ENCODE measurements at regions of chr4 and their contacts with region 1.

Region 1: DNA sequence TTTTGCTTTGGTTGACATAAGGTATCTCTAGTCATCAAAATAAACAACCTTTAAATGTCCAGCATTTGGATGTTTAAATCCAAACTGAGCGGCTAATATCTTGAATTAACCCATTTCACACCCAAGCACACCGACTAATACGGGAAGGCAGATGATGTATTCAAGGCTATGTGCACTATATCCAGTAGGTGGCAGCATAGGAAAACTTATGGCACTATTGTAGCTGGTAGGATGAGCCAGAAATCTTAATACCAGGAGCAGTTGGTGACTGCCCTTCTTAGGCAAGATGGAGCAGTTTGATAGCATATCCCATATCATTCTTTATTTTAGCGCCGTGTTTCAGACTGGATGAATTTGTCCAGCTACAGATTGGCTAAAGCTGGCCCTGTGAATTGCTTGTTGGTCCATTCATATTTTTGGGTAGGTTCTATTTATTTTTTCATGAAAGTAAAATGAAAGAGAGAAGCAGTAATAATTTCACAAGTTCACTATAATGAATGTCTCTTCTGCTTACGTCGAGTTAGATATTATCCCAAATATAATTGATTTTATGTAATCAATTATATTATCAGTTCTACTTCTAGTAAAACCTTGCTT is 24.4 kb downstream of the UCHL1 start:
- DNase-seq: peak in 1 of 2 donors; percentile 30
- H3K4me3 ChIP-seq: no peak overlapping the region
- H3K27ac ChIP-seq: no peak overlapping the region
- H3K4me1 ChIP-seq: no peaks in the 10 kb centered on the region
- H3K27me3 ChIP-seq: no peaks in the 10 kb centered on the region
- CTCF ChIP-seq: peak; percentile 83 to 95

Region 2: GRCh38 chr4:41661442-41662076 is 380.4 kb after region 1 on chr4:
- intact Hi-C with region 1: loop called (anchors 5 kb)
- DNase-seq: peak; percentile 67 to 72
- H3K4me3 ChIP-seq: no peak overlapping the region
- H3K27ac ChIP-seq: no peak overlapping the region
- H3K4me1 ChIP-seq: peaks cover 0 to 8% (median 5%) of the 10 kb centered on the region in 4 donors
- H3K27me3 ChIP-seq: no peaks in the 10 kb centered on the region
- CTCF ChIP-seq: peak; percentile 87 to 98

Region 3: GRCh38 chr4:41882625-41883347 is 601.6 kb after region 1 on chr4:
- intact Hi-C with region 1: loop called (anchors 10 kb)
- DNase-seq: no peak
- H3K4me3 ChIP-seq: peak overlapping the region; percentile 32 to 57
- H3K27ac ChIP-seq: no peak overlapping the region
- H3K4me1 ChIP-seq: peaks cover 0 to 32% (median 27%) of the 10 kb centered on the region in 4 donors
- H3K27me3 ChIP-seq: peaks cover 8 to 82% of the 10 kb centered on the region in 2 donors
- CTCF ChIP-seq: peak; percentile 56 to 97